ENCODE measurements at regions of chr9 and their contacts with region 1.

Region 1: DNA sequence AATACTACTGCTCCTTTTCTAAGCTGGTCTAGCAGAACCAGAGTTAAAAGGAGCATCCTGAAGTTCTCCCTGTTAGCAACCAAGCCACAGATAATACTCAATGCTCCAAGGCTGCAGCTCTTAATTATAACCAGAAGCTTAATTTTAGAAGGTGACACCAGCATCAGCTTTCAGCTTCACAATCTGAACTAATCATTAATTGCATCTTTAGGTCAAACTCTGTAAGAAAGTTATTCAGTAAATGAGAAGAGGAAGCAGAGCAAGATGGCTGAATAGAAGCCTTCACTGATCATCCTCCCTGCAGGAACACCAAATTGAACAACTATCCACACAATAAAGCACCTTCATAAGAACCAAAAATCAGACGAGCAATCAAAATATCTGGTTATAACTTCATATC is 38.5 kb downstream of the APBA1 start:
- DNase-seq: no peak
- ATAC-seq: no peak
- H3K4me3 ChIP-seq: no peak overlapping the region
- H3K27ac ChIP-seq: no peak overlapping the region
- H3K4me1 ChIP-seq: no peaks in the 10 kb centered on the region; the same call in 1 of the 2 replicates
- H3K27me3 ChIP-seq: no peaks in the 10 kb centered on the region
- CTCF ChIP-seq: no peak
- POLR2A ChIP-seq: no peak
- RAD21 ChIP-seq: no peak

Region 2: GRCh38 chr9:69397384-69398214 is 236.1 kb before region 1 on chr9:
- CTCF ChIA-PET with region 1: no interaction called
- POLR2A ChIA-PET with region 1: no interaction called
- dilution Hi-C with region 1: no loop called
- in situ Hi-C with region 1: no loop called
- intact Hi-C with region 1: loop called (anchors 1 kb)
- DNase-seq: no peak
- ATAC-seq: no peak
- H3K4me3 ChIP-seq: no peak overlapping the region
- H3K27ac ChIP-seq: no peak overlapping the region
- H3K4me1 ChIP-seq: no peaks in the 10 kb centered on the region
- H3K27me3 ChIP-seq: peaks cover 10% of the 10 kb centered on the region
- CTCF ChIP-seq: no peak
- POLR2A ChIP-seq: no peak
- RAD21 ChIP-seq: no peak

Region 3: GRCh38 chr9:69605406-69605805 is 28.3 kb before region 1 on chr9:
- CTCF ChIA-PET with region 1: no interaction called
- POLR2A ChIA-PET with region 1: no interaction called
- dilution Hi-C with region 1: no loop called
- in situ Hi-C with region 1: no loop called
- intact Hi-C with region 1: no loop called
- DNase-seq: no peak
- ATAC-seq: no peak
- H3K4me3 ChIP-seq: no peak overlapping the region
- H3K27ac ChIP-seq: no peak overlapping the region
- H3K4me1 ChIP-seq: no peaks in the 10 kb centered on the region
- H3K27me3 ChIP-seq: no peaks in the 10 kb centered on the region
- CTCF ChIP-seq: no peak
- POLR2A ChIP-seq: no peak
- RAD21 ChIP-seq: no peak

Measured in IMR-90 (cell line).